ENCODE measurements at regions of chr11 and their contacts with region 1.

Region 1: DNA sequence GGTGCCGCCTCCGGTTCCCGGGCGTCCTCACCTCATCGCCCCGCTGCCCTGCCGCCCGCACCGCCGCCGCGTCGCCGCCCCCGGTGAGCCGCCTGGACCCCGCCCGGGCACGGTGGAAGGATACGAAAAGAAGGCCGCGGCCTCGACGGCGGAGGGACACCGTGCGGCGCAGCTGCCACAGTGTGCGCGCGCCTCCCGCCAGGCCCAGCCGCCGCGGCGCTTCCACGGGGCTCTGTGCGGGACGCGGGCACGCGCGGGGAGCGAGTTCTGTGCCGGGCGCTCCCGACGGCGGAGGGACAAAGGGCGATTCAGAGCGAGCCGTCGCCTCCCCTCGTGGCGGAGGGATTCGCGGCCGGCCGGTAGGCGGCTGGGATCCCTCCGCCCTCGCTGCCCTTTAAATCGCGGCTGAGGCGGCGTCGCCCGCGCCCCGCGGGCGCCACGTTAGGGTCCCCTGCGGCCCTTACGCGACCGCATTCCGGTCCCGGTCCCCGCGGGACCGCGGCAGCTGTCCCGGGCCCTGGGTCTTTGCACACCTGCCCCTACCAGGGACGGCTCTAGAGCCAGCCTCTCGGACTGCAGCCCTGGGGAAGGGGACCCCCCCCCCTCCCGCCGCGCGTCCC is 569 bp upstream of the KMT5B start:
- DNase-seq: peak in 1 of 2 donors; percentile 92
- H3K4me3 ChIP-seq: peak overlapping the region; percentile 90 to 92
- H3K27ac ChIP-seq: peak overlapping the region; percentile 96 to 100
- H3K4me1 ChIP-seq: peaks cover 3 to 29% of the 10 kb centered on the region in 2 donors
- H3K27me3 ChIP-seq: no peaks in the 10 kb centered on the region
- CTCF ChIP-seq: no peak

Region 2: DNA sequence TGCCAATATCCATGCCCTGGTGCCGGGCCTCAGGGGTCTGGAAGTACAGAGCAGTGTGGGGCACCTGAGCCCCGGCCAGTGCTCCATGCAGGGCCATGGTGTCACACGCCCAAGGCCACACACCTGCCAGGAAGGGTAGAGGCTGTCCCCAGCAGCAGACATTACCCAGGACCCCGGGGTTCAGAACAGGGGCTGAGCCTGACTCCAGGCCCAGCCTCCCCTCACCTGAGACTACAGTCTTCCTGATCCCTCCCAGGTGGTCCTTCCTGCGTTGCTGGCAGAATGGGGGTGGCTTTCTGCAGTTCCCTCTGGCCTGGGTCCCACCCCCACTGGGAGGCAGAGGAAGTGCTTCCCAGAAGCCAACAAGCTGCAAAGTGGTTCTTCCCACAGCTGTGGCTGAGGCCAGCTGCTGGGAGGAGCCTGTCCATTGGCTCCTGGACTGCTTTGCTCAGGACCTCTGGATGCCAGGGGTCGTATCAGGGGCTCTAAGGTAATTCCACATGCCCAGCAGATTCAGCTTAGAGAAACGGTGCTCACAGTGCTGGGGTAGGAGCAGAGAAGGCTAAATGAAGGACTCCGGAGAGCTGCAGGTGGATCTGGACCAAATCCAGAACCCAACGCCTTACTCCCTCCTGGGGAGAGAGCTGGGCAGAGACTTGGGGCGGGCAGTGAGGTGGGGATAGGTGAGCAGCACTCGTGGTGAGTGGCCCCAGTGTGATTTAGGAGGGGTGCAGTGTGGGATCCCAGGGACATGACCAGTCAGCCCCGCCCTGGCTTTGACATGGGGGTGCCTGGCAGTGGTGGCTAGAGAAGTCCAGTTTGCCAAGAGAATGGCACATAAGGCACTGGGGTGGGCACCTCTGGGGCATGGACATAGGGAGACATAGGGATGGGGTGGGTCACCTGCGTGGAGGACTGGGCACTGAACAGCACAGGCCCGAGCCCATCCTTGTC is 162.2 kb before region 1 on chr11:
- intact Hi-C with region 1: no loop called
- DNase-seq: no peak
- H3K4me3 ChIP-seq: no peak overlapping the region
- H3K27ac ChIP-seq: no peak overlapping the region
- H3K4me1 ChIP-seq: no peaks in the 10 kb centered on the region
- H3K27me3 ChIP-seq: no peaks in the 10 kb centered on the region
- CTCF ChIP-seq: no peak

Region 3: DNA sequence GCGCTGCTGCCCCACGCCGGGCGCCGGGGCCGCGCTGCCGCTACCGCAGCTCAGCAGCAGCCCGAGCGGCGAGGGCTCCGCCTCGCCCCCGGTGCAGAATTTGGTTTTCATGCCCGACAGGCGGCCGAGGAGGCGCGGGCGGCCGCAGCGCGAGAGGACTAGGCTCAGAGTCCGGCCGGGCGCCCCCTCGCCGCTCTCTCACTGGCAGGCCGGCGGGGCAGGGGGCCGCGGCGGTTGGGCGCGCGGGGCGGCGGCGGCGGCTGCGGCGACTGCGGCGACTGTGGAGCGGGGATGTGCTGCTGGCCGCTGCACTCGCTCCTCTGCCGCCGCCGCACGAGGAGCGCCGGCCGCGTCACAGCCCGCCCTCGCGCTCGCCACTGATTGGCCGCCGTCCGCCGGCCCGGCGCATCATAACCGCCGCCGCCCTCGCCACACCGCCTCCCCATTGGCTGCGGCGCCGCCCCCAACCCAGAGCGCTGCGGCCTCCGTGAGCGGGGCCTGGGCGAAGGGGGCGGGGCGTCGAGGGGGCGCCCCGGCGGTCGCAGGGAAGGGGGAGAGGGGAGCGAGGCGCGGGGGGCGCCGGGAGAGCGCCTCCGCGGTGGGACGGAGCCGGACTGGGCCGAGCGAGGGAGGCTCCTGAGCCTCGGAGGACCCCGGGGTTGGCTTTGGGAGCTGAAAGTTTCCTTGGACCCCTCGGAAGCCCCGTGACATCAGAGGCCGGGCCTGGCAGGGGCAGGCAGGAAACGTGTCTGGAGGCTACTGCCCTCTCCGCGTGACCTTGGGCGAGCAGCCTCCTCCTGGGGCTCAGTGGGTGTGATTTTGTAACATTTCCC is 92.4 kb before region 1 on chr11 and contains the start of gene CHKA:
- intact Hi-C with region 1: loop called (anchors 1 kb)
- DNase-seq: peak; percentile 64 to 95
- H3K4me3 ChIP-seq: peak within 1 kb of the TSS; percentile 82 to 83
- H3K27ac ChIP-seq: peak within 1 kb of the TSS; percentile 97 to 99
- H3K4me1 ChIP-seq: peaks cover 0 to 2% of the 10 kb centered on the region in 2 donors
- H3K27me3 ChIP-seq: no peaks in the 10 kb centered on the region
- CTCF ChIP-seq: peak in 1 of 3 experiments; percentile 29
- total RNA-seq, gene CHKA: 10.1 TPM

Region 4: GRCh38 chr11:68297812-68298658 is 84.4 kb after region 1 on chr11:
- intact Hi-C with region 1: loop called (anchors 5 kb)
- DNase-seq: peak in 1 of 2 donors; percentile 86
- H3K4me3 ChIP-seq: peak overlapping the region in 1 of 2 donors; percentile 12
- H3K27ac ChIP-seq: no peak overlapping the region
- H3K4me1 ChIP-seq: peaks cover 0 to 7% of the 10 kb centered on the region in 2 donors
- H3K27me3 ChIP-seq: no peaks in the 10 kb centered on the region
- CTCF ChIP-seq: peak; percentile 96 to 100 (median 99)

Region 5: DNA sequence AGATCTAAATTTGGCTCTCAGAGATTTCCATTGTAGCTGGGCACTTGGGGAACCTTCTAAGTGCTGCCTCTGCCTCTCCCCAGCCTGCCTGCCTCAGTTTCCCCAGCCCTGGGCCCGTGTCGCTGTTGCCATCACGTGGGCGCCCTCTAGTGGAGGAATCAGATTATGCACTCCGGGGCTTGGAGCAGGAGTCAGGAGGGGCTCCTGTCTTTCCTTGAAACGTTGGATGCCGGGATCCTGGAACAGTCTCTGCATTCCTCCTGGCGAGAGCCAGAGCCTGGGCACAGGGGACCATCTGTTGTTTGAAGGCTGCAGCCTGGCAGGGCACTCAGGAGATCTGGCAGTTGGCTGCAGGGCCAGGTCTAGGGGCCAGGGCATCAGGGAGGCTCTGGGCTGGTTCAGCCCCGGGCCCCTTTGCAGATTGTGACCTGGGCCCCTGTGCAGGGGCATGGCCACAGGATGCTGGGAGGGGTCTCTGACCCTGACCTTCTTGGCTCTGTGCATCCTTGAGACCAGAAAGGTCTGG is 170.4 kb after region 1 on chr11:
- intact Hi-C with region 1: loop called (anchors 1 kb)
- DNase-seq: peak; percentile 28 to 88
- H3K4me3 ChIP-seq: no peak overlapping the region
- H3K27ac ChIP-seq: peak overlapping the region; percentile 69 to 78
- H3K4me1 ChIP-seq: peaks cover 24 to 47% of the 10 kb centered on the region in 2 donors
- H3K27me3 ChIP-seq: no peaks in the 10 kb centered on the region
- CTCF ChIP-seq: peak; percentile 89 to 96 (median 94)

Region 6: GRCh38 chr11:68459886-68460740 is 246.4 kb after region 1 on chr11:
- intact Hi-C with region 1: loop called (anchors 2 kb)
- DNase-seq: peak; percentile 96 to 99
- H3K4me3 ChIP-seq: peak overlapping the region; percentile 71 to 74
- H3K27ac ChIP-seq: peak overlapping the region; percentile 92
- H3K4me1 ChIP-seq: peaks cover 6 to 25% of the 10 kb centered on the region in 2 donors
- H3K27me3 ChIP-seq: no peaks in the 10 kb centered on the region
- CTCF ChIP-seq: peak in 1 of 3 experiments; percentile 12

Measured in ascending aorta (tissue), 2 donors.